HepG2 (cell line): ENCODE measurements at regions of chr13 and their contacts with region 1.

Region 1: GRCh38 chr13:49549289-49549688 is 36.1 kb downstream of the RCBTB1 start:
- DNase-seq: no peak
- ATAC-seq: peak; percentile 43; the same call in 2 of the 3 replicates
- H3K4me3 ChIP-seq: no peak overlapping the region
- H3K27ac ChIP-seq: no peak overlapping the region
- H3K4me1 ChIP-seq: peaks cover 6% of the 10 kb centered on the region
- H3K27me3 ChIP-seq: no peaks in the 10 kb centered on the region
- CTCF ChIP-seq: peak; percentile 28; the same call in 1 of the 2 replicates
- EP300 ChIP-seq: no peak
- POLR2A ChIP-seq: no peak
- RAD21 ChIP-seq: no peak

Region 2: DNA sequence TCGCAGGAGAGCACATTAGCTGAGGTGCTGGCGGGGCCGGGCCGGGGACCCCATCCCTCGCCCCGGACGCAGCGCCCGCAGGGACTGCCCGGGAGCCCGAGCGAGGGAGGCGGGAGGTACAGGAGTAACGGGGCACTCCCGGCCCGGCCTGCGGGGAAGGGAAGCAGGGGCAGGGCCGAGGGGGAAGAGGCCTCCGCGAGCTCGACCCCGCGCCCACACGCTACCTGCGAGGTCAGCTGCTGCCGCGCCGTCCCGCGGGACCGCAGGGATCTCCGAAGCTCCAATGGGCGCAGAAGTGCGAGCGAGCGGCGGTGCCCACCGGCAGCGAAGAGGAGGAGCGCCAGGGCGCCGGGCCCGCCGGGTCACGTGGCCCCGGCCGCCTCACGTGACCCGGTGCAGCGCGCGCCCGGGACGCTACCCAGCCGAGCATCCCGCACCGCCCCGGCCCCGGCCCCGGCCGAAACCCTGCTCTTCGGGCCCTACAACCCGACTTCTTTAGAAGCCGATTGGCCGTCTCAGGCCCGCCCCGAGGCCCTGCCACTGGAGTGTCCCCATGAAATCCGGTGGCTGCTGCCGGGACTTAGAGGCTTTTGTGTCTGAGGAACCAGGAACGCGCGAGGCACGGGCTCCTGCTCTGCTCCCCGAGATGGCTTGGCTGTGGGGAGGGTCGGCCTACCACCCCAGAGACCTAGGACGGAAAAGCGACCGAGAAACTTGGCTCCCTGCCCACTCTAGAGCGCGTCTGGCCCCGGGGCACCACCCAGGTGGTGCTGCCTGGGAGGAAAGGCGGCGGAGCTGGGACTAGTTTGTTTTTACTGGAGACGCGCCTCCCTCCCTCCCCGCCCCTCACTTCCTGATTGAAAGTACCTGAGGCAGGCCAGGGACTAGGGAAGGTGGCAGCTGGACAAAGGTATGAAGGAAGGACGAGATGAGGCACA is 36.2 kb after region 1 on chr13 and contains the start of gene RCBTB1:
- CTCF ChIA-PET with region 1: no interaction called
- POLR2A ChIA-PET with region 1: no interaction called
- in situ Hi-C with region 1: no loop called
- intact Hi-C with region 1: loop called (anchors 2 kb)
- DNase-seq: peak; percentile 52
- ATAC-seq: peak; percentile 92
- H3K4me3 ChIP-seq: peak within 1 kb of the TSS; percentile 82 to 93 (median 89)
- H3K27ac ChIP-seq: peak within 1 kb of the TSS; percentile 69
- H3K4me1 ChIP-seq: peaks cover 61% of the 10 kb centered on the region
- H3K27me3 ChIP-seq: no peaks in the 10 kb centered on the region; a peak in 1 of 5 replicates
- CTCF ChIP-seq: no peak; the same call in 1 of the 2 replicates
- EP300 ChIP-seq: no peak
- POLR2A ChIP-seq: peak; percentile 34 to 62; a peak in 3 of 4 replicates
- RAD21 ChIP-seq: no peak
- total RNA-seq, gene RCBTB1: 21.6 and 28.3 TPM in 2 replicates